Dendritic cell treated with granulocyte-macrophage colony-stimulating factor and Interleukin-4, amounts not matched to agents 40 ng/mL and 50 ng/mL, for 4 days (primary cell): ENCODE measurements at regions of chr11 and their contacts with region 1.

Region 1: GRCh38 chr11:1515082-1516060 is 28.8 kb upstream of the MOB2 start:
- H3K4me3 Mint-ChIP-seq: no peak overlapping the region
- H3K27ac Mint-ChIP-seq: no peak overlapping the region
- H3K4me1 Mint-ChIP-seq: peaks cover 36% of the 10 kb centered on the region
- H3K27me3 Mint-ChIP-seq: no peaks in the 10 kb centered on the region

Region 2: DNA sequence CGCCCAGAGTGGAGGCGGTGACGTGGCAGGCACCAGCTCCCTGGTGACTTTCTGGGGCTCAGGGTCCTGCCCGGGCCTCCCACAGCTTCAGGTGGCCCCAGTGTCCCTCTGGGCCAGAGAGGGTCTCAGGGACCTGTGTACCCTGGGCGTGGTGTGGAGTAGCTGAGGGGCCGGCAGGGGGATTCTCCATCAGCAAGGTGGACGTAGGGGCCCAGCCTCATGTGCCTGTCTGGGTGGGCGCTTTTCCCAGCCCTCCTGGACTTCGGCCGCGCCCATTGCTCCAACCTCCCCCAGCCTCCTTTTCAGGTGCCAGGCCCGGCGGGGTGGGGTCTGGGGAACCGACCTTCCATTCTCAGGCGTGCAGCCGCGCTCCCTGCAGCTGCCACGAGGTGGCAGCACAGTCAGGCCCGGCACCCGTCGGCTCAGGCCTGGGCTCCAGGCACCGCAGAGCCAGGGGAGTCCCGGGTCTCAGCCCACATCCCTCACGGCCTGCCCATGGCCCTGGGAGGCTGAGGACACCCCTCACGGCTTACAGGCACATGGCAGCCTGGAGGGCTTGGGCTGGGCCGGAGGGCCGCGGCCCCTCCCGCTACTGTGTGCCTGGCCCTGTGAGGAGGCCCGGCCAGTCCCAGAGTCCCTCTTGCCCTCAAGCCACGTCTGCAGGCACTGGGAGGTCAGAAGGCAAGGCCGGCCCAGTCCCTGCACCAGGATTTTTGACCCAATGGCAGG is 312.4 kb before region 1 on chr11:
- intact Hi-C with region 1: loop called (anchors 1 kb)
- H3K4me3 Mint-ChIP-seq: no peak overlapping the region
- H3K27ac Mint-ChIP-seq: no peak overlapping the region
- H3K4me1 Mint-ChIP-seq: no peaks in the 10 kb centered on the region
- H3K27me3 Mint-ChIP-seq: no peaks in the 10 kb centered on the region

Region 3: GRCh38 chr11:1293631-1294030 is 221.7 kb before region 1 on chr11:
- intact Hi-C with region 1: loop called (anchors 5 kb)
- H3K4me3 Mint-ChIP-seq: no peak overlapping the region
- H3K27ac Mint-ChIP-seq: no peak overlapping the region
- H3K4me1 Mint-ChIP-seq: peaks cover 27% of the 10 kb centered on the region
- H3K27me3 Mint-ChIP-seq: no peaks in the 10 kb centered on the region